ENCODE measurements at regions of chr20 and their contacts with region 1.

Region 1: DNA sequence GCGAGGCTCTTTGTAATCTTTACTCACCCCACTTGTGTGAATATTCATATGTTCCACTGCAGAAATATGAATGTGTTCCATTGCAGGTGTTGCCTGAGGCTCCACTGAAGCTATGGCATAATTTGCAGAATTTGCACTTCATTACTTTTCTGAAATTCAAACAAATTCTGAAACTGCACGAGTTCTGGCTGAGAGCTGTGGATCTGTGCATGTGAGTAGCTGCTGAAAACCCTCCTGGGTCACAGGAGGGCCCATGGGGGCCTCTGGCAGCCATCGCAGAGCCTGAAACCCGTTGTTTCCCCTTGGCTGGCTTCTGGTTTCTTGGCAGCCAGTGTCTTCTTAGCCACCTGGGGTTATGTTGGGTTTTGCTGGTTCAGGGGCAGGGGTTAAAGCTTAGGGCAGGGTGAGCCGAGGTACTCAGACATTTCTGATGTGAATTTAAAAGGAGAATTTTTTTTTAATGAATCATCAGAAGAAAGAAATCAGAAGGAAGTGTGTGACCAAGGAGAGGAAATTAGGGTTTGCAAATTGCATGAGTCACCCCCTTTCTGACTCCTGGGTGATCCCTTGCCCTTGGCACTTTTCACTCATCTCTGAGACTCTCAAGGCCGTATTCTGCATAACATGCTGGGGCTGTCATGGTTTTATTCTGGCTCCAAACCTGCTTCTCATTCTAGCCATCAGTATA is 40.6 kb downstream of the TOX2 start:
- DNase-seq: peak; percentile 80 to 99
- H3K4me3 ChIP-seq: peak overlapping the region; percentile 22; the same call in 1 of the 2 replicates
- H3K27ac ChIP-seq: peak overlapping the region; percentile 97
- H3K4me1 ChIP-seq: peaks cover 77% of the 10 kb centered on the region
- H3K27me3 ChIP-seq: no peaks in the 10 kb centered on the region
- CTCF ChIP-seq: no peak

Region 2: DNA sequence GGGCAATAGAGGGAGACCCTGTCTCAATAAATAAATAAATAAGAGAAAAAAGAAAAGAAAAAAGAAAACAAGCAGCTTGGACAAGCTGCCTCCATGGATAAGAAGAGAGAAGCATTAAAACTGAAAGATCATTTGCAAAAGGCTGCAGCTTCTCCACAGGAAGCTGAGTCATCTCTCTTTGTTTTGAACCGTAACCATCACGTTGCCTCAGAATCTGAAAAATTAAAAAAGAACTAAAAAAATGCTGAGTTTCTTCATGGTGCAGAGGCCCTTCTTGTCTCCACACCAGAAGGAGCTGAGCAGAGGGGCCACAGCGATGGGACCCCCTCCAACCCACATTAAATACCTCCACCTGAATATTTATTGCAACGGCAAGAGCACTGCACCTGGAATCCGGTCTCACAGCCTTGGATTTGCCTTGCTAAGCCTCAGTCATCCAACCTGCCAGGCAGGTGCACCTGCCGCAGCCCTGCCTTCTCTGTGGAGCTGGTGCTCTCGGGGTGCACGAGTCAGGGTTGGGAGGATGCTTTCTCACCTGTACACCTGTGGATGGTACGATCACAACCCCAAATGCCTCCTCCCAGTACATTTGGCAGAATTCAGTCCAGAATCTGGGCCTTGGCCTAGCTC is 12.4 kb before region 1 on chr20:
- CTCF ChIA-PET with region 1: interaction called, 3 read pairs
- POLR2A ChIA-PET with region 1: no interaction called
- intact Hi-C with region 1: loop called (anchors 1 kb)
- DNase-seq: peak; percentile 70 to 85
- H3K4me3 ChIP-seq: peak overlapping the region; percentile 53
- H3K27ac ChIP-seq: peak overlapping the region; percentile 95
- H3K4me1 ChIP-seq: peaks cover 68% of the 10 kb centered on the region
- H3K27me3 ChIP-seq: no peaks in the 10 kb centered on the region
- CTCF ChIP-seq: no peak

Region 3: DNA sequence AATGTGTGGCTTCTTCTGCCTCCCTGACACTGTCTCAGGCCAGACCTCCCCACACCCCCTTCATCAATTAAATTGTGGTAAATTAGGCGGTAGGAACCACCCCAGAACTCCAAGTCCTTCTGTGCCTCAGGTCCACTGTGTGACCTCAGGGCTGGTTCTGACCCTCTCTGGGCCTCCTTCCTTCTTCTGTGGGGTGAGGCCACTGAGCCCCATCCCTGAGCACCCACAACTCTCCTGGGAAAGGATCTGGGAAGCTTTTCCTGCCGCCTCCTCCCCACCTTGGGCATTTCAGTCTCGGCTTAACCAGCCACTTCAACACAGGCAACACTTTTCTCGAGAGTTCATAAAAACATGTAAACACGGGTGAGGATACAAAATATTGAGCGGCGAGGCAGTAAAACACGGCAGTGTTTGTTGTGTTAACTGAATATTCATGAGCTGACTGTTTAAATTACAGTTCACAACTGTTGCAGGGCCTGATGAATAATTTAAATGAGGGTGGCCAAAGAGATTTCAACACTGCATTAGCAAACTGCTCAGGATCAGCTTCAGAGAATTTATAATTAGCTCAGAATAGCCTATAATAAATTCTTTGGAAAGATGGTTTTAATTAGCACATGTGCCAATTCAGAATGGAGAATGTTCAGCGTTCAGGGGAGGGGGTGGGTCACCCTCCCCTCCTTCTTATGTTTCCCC is 71.6 kb after region 1 on chr20:
- CTCF ChIA-PET with region 1: interaction called, 15 read pairs
- POLR2A ChIA-PET with region 1: no interaction called
- intact Hi-C with region 1: no loop called
- DNase-seq: no peak
- H3K4me3 ChIP-seq: no peak overlapping the region
- H3K27ac ChIP-seq: no peak overlapping the region
- H3K4me1 ChIP-seq: no peaks in the 10 kb centered on the region
- H3K27me3 ChIP-seq: no peaks in the 10 kb centered on the region
- CTCF ChIP-seq: no peak